HCT116 (cell line): ENCODE measurements at regions of chr1 and their contacts with region 1.

Region 1: DNA sequence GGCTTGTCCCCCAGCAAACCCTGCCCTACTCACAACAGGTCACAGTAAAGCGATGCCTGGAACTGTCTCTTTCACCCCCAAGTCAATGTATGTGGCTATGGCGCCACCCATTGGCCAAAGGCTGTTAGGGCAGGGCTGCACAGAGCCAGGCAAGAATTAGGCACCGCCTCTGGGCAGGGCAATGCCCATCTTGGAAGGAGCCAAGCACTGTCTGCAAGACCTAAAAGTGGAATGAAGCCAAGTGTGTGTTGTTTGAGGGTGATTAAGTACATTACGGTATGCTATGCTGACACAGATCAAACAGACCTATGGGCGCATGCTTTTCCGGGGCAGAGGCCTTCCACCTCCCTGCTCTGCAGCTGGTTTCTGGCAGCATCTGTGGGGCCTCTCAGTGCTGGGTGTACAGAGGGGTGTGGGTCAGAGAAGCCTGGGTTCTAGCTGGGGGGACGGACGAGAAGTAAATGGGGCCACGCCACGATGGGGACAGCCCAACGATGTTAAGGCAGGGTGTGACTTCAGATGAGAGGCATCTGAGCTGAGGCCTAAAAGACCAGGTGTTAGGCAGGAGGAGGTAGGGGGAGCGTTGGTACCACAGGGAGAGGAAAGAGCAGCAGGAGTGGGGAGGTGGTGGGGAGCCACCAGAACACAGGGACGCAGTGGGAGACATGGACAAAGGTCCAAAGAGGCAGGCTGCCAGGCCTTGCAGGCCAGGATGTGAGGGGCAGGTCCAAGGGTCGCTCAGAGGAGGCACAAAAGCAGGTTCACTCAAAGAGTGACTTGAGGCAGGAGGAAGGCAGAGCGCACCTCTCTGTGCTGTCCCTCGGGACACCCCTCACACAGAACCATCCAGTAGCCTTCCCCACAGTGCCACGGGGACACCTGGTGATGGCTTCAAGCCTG is 49.8 kb downstream of the ACOT7 start:
- DNase-seq: peak; percentile 45
- ATAC-seq: peak; percentile 95
- H3K4me3 ChIP-seq: no peak overlapping the region
- H3K27ac ChIP-seq: peak overlapping the region; percentile 5; the same call in 1 of the 2 replicates
- H3K4me1 ChIP-seq: peaks cover 4 to 14% of the 10 kb centered on the region in 2 experiments; a peak in 2 of 4 replicates
- H3K27me3 ChIP-seq: no peaks in the 10 kb centered on the region
- CTCF ChIP-seq: peak; percentile 86 to 98 (median 97)
- POLR2A ChIP-seq: no peak
- RAD21 ChIP-seq: peak; percentile 95

Region 2: DNA sequence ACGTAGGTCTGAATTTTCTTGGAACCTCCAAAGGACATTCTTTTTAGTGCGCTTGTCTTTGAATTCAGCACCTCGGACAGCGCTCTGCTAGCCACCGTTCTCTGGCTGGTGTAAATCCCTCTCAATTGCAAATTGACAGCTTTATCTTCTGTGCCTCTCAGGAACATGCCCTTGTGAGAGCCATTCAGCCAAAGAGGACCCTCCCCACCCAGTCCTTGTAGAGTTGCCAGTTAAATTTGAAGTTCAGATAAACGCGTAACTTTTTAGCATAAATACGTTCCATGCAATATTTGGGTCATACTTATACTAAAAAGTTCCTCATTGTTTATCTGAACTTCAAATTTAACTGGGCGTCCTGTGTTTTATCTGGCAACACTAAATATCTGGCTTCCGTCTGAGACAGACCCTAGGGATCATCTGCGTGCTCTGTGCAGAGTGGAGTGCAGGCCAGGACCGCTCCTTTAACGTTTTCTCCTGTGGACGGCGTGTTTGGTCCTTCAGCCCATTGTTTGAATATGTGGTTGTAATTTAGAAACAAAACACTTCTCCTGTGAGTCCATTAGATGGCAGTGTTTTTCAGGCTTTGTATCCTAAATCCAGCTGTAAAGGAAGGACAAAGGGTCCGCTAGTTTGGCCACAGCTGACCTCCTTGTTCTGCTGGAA is 291.1 kb before region 1 on chr1:
- CTCF ChIA-PET with region 1: no interaction called
- POLR2A ChIA-PET with region 1: no interaction called
- RAD21 ChIA-PET with region 1: no interaction called
- intact Hi-C with region 1: loop called (anchors 10 kb)
- DNase-seq: no peak
- ATAC-seq: peak; percentile 76
- H3K4me3 ChIP-seq: no peak overlapping the region
- H3K27ac ChIP-seq: no peak overlapping the region
- H3K4me1 ChIP-seq: no peaks in the 10 kb centered on the region
- H3K27me3 ChIP-seq: no peaks in the 10 kb centered on the region
- CTCF ChIP-seq: peak; percentile 54 to 77 (median 65); a peak in 5 of 6 replicates
- POLR2A ChIP-seq: no peak
- RAD21 ChIP-seq: peak; percentile 82

Region 3: DNA sequence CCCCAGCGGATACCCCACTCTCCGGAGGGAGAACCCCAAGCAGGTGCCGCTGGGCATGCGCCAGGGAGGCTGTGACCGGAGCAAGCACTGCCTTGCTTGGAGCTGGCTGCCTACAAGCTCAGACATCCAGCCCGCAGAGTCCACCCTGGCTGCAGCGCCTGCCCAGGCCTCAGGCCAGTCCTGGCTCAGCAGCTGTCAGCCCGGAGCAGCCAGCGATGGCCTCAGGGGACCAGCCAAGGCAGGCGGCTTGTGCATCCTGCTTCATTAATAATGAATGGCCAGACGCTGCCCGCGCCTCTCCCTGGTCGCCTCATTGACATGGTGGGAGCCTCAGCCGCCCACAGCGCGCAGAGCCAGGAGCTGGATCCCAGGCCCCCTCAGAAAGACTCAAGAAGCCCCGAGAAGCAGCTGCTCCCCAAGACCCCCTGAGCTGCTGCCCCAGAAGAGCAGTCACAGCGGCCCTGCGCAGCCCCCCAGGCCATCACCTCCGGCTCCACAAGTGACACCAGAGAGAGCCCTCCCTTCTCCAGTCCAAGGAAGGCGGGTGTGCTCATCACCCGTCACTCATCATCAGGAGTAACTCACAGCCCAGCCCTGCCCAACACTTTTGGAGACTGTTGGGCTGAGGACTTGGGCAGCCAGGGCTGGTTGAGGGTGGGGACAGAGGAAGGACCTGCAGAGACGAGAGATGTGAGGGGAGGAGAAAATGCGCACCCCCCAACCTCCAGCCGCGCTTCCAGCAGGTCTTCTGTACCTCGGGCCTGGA is 278.5 kb before region 1 on chr1:
- CTCF ChIA-PET with region 1: no interaction called
- POLR2A ChIA-PET with region 1: no interaction called
- RAD21 ChIA-PET with region 1: no interaction called
- intact Hi-C with region 1: no loop called
- DNase-seq: no peak
- ATAC-seq: no peak
- H3K4me3 ChIP-seq: no peak overlapping the region
- H3K27ac ChIP-seq: no peak overlapping the region
- H3K4me1 ChIP-seq: no peaks in the 10 kb centered on the region
- H3K27me3 ChIP-seq: no peaks in the 10 kb centered on the region
- CTCF ChIP-seq: no peak
- POLR2A ChIP-seq: no peak
- RAD21 ChIP-seq: no peak

Region 4: DNA sequence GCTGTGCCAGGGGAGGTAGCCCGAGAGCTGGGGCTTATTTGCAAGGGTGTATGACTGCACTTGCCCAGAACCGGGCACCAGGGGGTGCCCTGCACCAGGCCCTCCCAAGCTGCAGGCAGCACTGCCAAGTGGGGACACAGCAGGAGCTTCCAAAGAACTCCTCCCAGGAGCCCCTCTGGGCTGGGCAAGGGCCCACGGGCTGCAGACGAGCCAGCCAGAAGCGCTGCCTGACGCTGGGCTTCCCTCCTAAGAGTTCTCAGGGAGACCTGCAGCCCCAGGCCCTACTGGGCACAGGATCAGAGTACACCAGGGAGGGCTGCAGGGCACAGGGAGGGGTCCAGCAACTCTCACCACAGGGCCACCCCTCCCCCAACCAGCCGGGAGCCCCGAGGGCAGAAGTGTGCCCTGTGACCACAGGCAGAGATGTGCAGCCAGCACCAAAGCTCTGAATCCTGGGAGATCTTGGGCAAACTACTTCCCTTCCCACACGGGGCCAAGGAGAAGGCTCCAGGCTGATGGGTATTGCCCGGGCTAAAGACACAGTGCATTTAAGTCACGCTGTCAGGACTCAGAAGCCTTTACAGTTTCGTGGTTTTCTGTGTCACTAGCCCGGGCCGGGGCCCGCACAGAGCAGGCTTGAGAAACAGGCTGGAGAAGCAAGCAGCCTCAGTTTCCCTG is 234.7 kb before region 1 on chr1:
- CTCF ChIA-PET with region 1: no interaction called
- POLR2A ChIA-PET with region 1: no interaction called
- RAD21 ChIA-PET with region 1: no interaction called
- intact Hi-C with region 1: loop called (anchors 2 kb)
- DNase-seq: peak; percentile 35
- ATAC-seq: peak; percentile 93
- H3K4me3 ChIP-seq: no peak overlapping the region
- H3K27ac ChIP-seq: no peak overlapping the region
- H3K4me1 ChIP-seq: peaks cover 0 to 4% of the 10 kb centered on the region in 2 experiments; a peak in 1 of 4 replicates
- H3K27me3 ChIP-seq: no peaks in the 10 kb centered on the region
- CTCF ChIP-seq: peak; percentile 69 to 87 (median 79)
- POLR2A ChIP-seq: no peak
- RAD21 ChIP-seq: peak; percentile 97

Region 5: DNA sequence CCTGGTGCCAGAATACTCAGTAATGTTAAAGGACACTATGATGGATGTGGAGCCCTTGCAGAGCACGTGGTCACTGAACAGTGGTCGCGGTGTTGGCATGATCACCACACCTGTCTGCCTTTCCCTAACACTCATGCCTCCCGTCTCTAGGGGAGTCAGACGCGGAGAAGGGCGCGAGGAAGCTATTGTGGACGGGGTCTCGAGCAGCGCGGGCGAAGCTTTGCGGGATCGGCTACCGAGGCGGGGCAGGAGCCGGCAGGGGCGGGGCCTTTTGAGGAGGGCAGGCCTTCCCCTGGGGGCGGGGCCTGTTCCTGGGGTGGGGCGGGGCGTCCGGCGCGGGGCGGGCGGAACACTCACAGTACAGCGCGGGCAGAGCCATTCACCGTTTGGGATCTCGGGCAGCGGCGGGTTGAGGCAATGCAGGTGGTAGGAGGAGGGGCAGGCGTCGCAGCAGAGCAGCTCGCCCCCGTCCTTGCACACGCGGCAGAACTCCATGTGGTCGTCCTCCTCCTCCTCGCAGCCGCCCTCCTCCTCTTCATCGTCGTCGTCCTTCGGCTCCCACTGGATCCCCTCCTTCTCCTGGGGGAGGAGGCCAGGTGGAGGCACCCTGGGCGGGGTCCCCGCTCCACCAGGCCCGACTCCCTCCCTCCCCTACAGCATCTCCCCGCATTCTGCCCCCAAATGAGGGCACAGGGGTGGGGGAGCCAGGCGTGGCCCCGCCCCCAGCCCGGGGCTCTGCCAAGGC is 195.1 kb before region 1 on chr1:
- CTCF ChIA-PET with region 1: no interaction called
- POLR2A ChIA-PET with region 1: no interaction called
- RAD21 ChIA-PET with region 1: no interaction called
- intact Hi-C with region 1: no loop called
- DNase-seq: peak; percentile 48
- ATAC-seq: peak; percentile 97
- H3K4me3 ChIP-seq: peak overlapping the region in 1 of 2 experiments; percentile 41; a peak in 2 of 4 replicates
- H3K27ac ChIP-seq: peak overlapping the region; percentile 22; the same call in 1 of the 2 replicates
- H3K4me1 ChIP-seq: peaks cover 5 to 19% of the 10 kb centered on the region in 2 experiments; a peak in 3 of 4 replicates
- H3K27me3 ChIP-seq: no peaks in the 10 kb centered on the region
- CTCF ChIP-seq: no peak
- POLR2A ChIP-seq: peak; percentile 30
- RAD21 ChIP-seq: no peak

Region 6: DNA sequence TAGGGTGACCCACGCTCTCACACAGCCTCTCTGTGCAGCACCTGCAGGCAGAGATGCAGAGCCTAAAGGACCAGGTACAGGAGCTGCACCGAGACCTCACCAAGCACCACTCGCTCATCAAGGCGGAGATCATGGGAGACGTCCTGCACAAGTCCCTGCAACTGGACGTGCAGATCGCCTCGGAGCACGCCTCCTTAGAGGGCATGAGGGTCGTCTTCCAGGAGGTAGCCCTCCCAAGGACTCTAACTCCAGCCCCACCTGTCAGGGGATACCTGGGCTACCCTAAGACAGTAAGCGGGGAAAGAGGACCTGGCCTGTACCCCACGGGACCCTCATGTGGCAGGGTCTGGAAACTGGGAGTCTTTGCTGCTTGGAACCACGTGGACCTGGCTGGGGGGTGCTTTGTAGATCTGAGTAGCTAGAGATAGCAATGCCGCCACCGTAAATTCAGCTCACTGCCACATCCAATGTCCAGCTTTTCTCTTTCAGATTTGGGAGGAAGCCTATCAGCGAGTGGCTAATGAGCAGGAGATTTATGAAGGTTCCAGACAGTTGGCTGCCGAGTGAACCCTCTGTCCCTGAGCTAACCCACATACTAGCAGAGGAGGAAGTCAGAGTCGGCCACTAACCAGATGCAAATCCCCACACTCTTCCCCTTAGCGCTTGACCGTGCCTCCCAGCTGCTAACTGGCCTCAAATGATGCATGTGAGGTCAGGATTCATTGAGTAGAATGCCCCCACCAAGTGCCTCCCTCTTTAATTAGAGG is 131.4 kb before region 1 on chr1:
- CTCF ChIA-PET with region 1: no interaction called
- POLR2A ChIA-PET with region 1: no interaction called
- RAD21 ChIA-PET with region 1: no interaction called
- intact Hi-C with region 1: no loop called
- DNase-seq: no peak
- ATAC-seq: no peak
- H3K4me3 ChIP-seq: no peak overlapping the region
- H3K27ac ChIP-seq: no peak overlapping the region
- H3K4me1 ChIP-seq: peaks cover 0 to 6% of the 10 kb centered on the region in 2 experiments; a peak in 3 of 4 replicates
- H3K27me3 ChIP-seq: no peaks in the 10 kb centered on the region
- CTCF ChIP-seq: no peak
- POLR2A ChIP-seq: no peak
- RAD21 ChIP-seq: no peak

Region 7: GRCh38 chr1:6393400-6394187 is 49.8 kb after region 1 on chr1 and contains the start of gene ACOT7:
- CTCF ChIA-PET with region 1: interaction called, 3 read pairs
- POLR2A ChIA-PET with region 1: no interaction called
- RAD21 ChIA-PET with region 1: interaction called in 1 of 2 experiments, 3 read pairs
- intact Hi-C with region 1: loop called (anchors 2 kb)
- DNase-seq: peak; percentile 69
- ATAC-seq: peak; percentile 88
- H3K4me3 ChIP-seq: peak within 1 kb of the TSS; percentile 79 to 96
- H3K27ac ChIP-seq: peak within 1 kb of the TSS; percentile 92
- H3K4me1 ChIP-seq: peaks cover 14 to 42% of the 10 kb centered on the region in 2 experiments
- H3K27me3 ChIP-seq: no peaks in the 10 kb centered on the region
- CTCF ChIP-seq: no peak
- POLR2A ChIP-seq: no peak
- RAD21 ChIP-seq: no peak
- total RNA-seq, gene ACOT7: 162 TPM

Region 8: GRCh38 chr1:6401673-6402072 is 57.9 kb after region 1 on chr1:
- CTCF ChIA-PET with region 1: interaction called, 6 read pairs
- POLR2A ChIA-PET with region 1: no interaction called
- RAD21 ChIA-PET with region 1: interaction called, 3 read pairs
- intact Hi-C with region 1: loop called (anchors 1 kb)
- DNase-seq: no peak
- ATAC-seq: no peak
- H3K4me3 ChIP-seq: no peak overlapping the region
- H3K27ac ChIP-seq: no peak overlapping the region
- H3K4me1 ChIP-seq: peaks cover 0 to 11% of the 10 kb centered on the region in 2 experiments; a peak in 3 of 4 replicates
- H3K27me3 ChIP-seq: no peaks in the 10 kb centered on the region
- CTCF ChIP-seq: no peak
- POLR2A ChIP-seq: no peak
- RAD21 ChIP-seq: no peak

Region 9: DNA sequence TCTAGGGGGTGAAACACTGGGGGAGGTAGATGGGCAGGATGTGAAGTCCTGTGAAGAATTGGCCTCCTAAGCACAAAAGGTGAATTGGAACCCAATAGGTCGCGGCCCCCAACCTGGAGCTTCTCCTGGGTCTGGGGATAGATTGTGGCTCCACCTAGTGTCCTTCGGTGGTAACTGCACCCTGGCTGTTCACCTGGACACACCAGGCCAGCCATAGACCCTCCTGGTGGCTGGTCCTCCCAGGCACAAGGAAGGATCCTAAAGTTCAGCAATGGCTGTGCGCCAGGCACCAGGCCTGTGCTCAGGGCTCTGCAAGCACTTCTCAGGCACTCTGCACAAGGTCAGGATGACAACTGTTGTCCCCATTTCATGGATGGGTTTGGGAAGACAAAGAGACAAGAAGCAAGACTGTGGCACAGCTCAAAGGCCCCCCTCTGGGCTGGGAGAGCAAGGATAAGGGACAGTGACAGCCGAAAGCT is 94.3 kb after region 1 on chr1:
- CTCF ChIA-PET with region 1: interaction called, 3 read pairs
- POLR2A ChIA-PET with region 1: no interaction called
- RAD21 ChIA-PET with region 1: interaction called in 1 of 2 experiments, 3 read pairs
- intact Hi-C with region 1: loop called (anchors 1 kb)
- DNase-seq: no peak
- ATAC-seq: peak; percentile 52
- H3K4me3 ChIP-seq: no peak overlapping the region
- H3K27ac ChIP-seq: no peak overlapping the region
- H3K4me1 ChIP-seq: peaks cover 8 to 27% of the 10 kb centered on the region in 2 experiments
- H3K27me3 ChIP-seq: no peaks in the 10 kb centered on the region
- CTCF ChIP-seq: peak in 2 of 3 experiments; percentile 93; a peak in 4 of 6 replicates
- POLR2A ChIP-seq: no peak
- RAD21 ChIP-seq: no peak